CD4-positive, alpha-beta T cell (primary cell): ENCODE measurements at regions of chr10 and their contacts with region 1.

Region 1: DNA sequence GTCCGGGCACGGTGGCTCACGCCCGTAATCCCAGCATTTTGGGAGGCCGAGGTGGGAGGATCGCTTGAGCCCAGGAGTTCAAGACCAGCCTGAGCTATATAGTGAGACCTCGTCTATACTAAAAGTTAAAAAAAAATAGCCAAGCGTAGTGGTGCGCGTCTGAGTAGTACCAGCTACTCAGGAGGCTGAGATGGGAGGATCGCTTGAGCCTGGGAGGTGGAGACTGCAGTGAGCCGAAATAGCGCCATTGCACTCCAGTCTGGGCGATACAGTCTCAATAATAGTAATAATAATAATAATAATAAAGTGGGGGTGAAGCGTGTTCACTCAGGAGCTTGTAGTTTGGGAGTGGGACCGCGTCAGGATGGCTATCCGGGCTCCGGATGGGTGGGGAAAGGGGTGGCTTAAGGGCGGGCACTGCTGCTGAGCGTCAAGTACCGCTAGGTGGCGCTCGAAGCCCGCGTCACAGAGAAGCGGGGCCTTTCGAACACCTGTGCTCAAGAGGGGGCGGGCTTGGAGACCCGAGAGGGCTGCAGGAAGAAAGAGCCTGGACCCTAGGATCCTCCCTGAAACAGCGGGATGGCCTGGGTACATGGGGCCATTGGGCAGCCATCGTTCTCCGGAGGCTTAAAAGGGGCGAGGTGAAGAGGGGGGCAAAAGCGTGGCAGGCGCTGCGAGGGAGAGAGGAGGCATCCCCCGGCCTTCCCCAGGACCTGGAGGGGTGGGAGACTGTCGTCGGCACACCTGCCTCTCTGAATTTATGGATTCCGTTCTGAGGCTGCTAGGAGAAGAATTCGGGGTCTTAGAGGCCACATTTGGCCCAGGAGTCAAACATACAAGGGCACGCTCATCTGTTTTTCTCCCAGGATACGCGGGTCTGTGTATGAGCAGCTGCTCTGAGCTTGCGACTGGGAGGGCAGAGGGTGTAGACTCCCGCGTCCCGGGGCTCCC is 14.5 kb downstream of the LBX1 start:
- DNase-seq: peak; percentile 61 to 87 (median 70)
- ATAC-seq: peak; percentile 73
- H3K4me3 ChIP-seq: no peak overlapping the region
- H3K4me3 Mint-ChIP-seq: peak overlapping the region; percentile 60
- H3K27ac ChIP-seq: no peak overlapping the region
- H3K27ac Mint-ChIP-seq: no peak overlapping the region
- H3K4me1 ChIP-seq: peaks cover 53% of the 10 kb centered on the region
- H3K4me1 Mint-ChIP-seq: peaks cover 33% of the 10 kb centered on the region
- H3K27me3 ChIP-seq: peaks cover 84 to 90% of the 10 kb centered on the region in 2 experiments
- H3K27me3 Mint-ChIP-seq: peaks cover 98% of the 10 kb centered on the region
- CTCF ChIP-seq: peak; percentile 88

Region 2: GRCh38 chr10:101236376-101237080 is 21.8 kb after region 1 on chr10:
- CTCF ChIA-PET with region 1: interaction called, 12 read pairs
- POLR2A ChIA-PET with region 1: interaction called, 3 read pairs
- intact Hi-C with region 1: no loop called
- DNase-seq: peak in 2 of 14 experiments; percentile 27 to 31
- ATAC-seq: peak; percentile 30
- H3K4me3 ChIP-seq: no peak overlapping the region
- H3K4me3 Mint-ChIP-seq: peak overlapping the region; percentile 69
- H3K27ac ChIP-seq: no peak overlapping the region
- H3K27ac Mint-ChIP-seq: no peak overlapping the region
- H3K4me1 ChIP-seq: peaks cover 32% of the 10 kb centered on the region
- H3K4me1 Mint-ChIP-seq: peaks cover 16% of the 10 kb centered on the region
- H3K27me3 ChIP-seq: peaks cover 81 to 94% of the 10 kb centered on the region in 2 experiments
- H3K27me3 Mint-ChIP-seq: peaks cover 91% of the 10 kb centered on the region
- CTCF ChIP-seq: no peak

Region 3: GRCh38 chr10:101291331-101292193 is 76.8 kb after region 1 on chr10:
- CTCF ChIA-PET with region 1: interaction called, 16 read pairs
- POLR2A ChIA-PET with region 1: no interaction called
- intact Hi-C with region 1: loop called (anchors 2 kb)
- DNase-seq: peak; percentile 7 to 64 (median 34)
- ATAC-seq: peak; percentile 74
- H3K4me3 ChIP-seq: peak overlapping the region; percentile 32
- H3K4me3 Mint-ChIP-seq: peak overlapping the region; percentile 80
- H3K27ac ChIP-seq: no peak overlapping the region
- H3K27ac Mint-ChIP-seq: no peak overlapping the region
- H3K4me1 ChIP-seq: peaks cover 23% of the 10 kb centered on the region
- H3K4me1 Mint-ChIP-seq: no peaks in the 10 kb centered on the region
- H3K27me3 ChIP-seq: peaks cover 59 to 87% of the 10 kb centered on the region in 2 experiments
- H3K27me3 Mint-ChIP-seq: peaks cover 88% of the 10 kb centered on the region
- CTCF ChIP-seq: peak; percentile 70

Region 4: DNA sequence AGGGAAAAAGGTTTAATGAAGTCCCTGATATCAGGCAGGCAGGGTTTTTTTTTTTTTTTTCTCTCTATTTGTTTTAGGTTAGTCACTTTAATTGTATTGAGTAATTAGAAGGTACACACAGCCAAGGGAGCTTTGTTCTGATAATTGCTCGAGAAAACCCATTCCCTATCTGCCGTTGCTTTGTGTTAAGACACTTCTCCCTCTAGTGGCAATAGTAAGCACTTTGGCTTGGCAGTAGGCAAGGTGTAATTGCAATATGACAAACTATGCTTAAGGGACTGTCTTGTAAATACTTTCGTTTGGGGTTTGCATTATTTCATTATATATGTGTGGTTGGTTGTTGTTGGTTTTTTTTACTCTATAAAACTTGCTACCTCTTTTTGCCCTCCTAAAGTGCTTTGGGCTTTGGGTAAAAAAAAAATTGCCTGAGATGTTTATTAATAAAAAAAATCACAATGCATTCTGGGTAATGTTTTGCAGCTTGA is 252.6 kb after region 1 on chr10:
- CTCF ChIA-PET with region 1: interaction called, 19 read pairs
- POLR2A ChIA-PET with region 1: no interaction called
- intact Hi-C with region 1: loop called (anchors 1 kb)
- DNase-seq: peak in 6 of 14 experiments; percentile 7 to 75 (median 41)
- ATAC-seq: peak; percentile 89
- H3K4me3 ChIP-seq: no peak overlapping the region
- H3K4me3 Mint-ChIP-seq: no peak overlapping the region
- H3K27ac ChIP-seq: no peak overlapping the region
- H3K27ac Mint-ChIP-seq: no peak overlapping the region
- H3K4me1 ChIP-seq: no peaks in the 10 kb centered on the region
- H3K4me1 Mint-ChIP-seq: peaks cover 17% of the 10 kb centered on the region
- H3K27me3 ChIP-seq: no peaks in the 10 kb centered on the region
- H3K27me3 Mint-ChIP-seq: no peaks in the 10 kb centered on the region
- CTCF ChIP-seq: peak; percentile 80

Region 5: DNA sequence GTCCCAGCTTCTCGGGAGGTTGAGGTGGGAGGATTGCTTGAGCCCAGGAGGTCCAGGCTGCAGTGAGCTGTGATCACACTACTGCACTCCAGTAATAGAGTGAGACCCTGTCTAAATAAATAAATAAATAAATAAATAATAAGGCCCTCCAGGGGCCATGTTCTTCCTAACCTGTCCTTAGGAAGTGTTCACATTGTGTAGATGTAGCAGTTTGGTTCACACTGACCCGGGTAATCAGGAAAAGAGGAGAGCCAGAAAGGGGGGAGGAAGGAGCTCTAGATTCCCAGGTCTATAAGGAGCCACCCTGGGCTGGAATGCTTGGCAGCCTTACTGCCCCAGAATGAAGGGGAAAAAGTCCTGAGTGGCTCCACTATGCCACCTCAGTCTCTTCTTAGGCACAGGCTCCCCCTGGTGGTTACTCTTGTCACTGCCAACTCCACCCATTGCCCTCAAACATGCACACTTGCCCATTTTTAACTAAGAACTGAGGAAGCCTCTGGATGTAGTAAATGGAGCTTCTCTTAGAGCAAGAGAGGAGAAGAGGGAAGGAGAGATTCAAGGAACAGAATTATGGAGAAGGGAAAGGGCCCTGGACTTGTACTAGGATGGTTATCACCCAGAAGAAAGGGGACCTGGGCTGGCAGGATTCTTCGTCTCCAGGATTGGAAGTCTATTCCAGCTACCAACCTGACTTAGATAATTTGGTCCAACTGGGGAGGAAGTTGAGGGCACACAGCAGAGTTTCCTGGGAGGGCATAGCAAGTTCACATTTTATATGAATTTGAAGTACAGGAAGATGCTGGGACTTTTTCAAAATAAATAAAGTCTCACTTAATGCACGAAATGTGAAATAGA is 858.2 kb after region 1 on chr10:
- CTCF ChIA-PET with region 1: no interaction called
- POLR2A ChIA-PET with region 1: no interaction called
- intact Hi-C with region 1: loop called in 1 of 2 experiments (anchors 5 kb)
- DNase-seq: peak; percentile 68 to 88 (median 76)
- ATAC-seq: peak; percentile 98
- H3K4me3 ChIP-seq: no peak overlapping the region
- H3K4me3 Mint-ChIP-seq: no peak overlapping the region
- H3K27ac ChIP-seq: no peak overlapping the region
- H3K27ac Mint-ChIP-seq: no peak overlapping the region
- H3K4me1 ChIP-seq: peaks cover 11% of the 10 kb centered on the region
- H3K4me1 Mint-ChIP-seq: no peaks in the 10 kb centered on the region
- H3K27me3 ChIP-seq: no peaks in the 10 kb centered on the region
- H3K27me3 Mint-ChIP-seq: no peaks in the 10 kb centered on the region
- CTCF ChIP-seq: peak; percentile 81